ENCODE measurements at regions of chr6 and their contacts with region 1.

Region 1: GRCh38 chr6:151451950-151452749 is at the start of gene RMND1:
- DNase-seq: peak; percentile 97
- H3K4me3 ChIP-seq: peak within 1 kb of the TSS; percentile 83
- H3K27ac ChIP-seq: peak within 1 kb of the TSS; percentile 72
- H3K4me1 ChIP-seq: peaks cover 13% of the 10 kb centered on the region; the same call in 1 of the 2 replicates
- H3K27me3 ChIP-seq: no peaks in the 10 kb centered on the region
- CTCF ChIP-seq: no peak
- total RNA-seq, gene RMND1: 17.6 and 19.3 TPM in 2 replicates

Region 2: DNA sequence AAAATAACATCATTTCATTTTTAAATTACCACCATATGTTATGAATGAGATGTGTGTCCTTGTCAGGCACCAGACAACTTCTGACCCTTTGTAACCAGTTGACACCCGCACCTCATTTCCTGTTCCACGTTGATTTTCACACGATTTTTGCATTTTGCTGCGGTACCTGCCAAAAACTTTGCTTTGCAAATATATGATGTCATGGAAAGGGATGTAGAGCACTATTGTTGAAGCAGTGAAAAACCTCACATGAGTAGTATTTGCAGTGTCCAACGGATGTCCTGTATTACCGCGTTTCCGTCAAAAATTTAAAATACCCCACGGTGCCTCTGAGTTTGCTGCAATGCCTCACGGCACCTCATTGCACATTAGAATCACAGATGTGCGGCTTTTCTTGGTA is 471.1 kb before region 1 on chr6:
- CTCF ChIA-PET with region 1: no interaction called
- POLR2A ChIA-PET with region 1: no interaction called
- intact Hi-C with region 1: no loop called
- DNase-seq: no peak
- H3K4me3 ChIP-seq: no peak overlapping the region
- H3K27ac ChIP-seq: no peak overlapping the region
- H3K4me1 ChIP-seq: no peaks in the 10 kb centered on the region
- H3K27me3 ChIP-seq: no peaks in the 10 kb centered on the region
- CTCF ChIP-seq: no peak

Region 3: DNA sequence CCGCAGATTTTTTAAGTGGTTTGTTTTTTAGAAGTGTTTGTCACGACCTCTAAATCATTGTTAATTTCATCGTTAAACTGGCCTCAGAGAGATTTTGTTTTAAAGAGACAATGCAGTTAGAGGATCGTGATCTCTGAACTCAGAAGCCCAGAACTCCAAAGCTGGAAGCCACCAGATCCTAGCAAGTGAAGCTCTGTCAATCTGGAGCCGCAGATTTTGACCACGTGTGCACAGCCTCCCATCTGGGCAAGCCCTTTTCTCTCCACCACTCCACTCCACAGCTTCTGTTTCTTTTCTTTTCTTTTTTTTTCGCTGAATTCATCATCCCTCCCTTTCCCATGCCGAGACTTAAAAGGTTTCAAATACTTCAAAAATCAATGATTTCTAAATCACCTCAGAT is 213.2 kb after region 1 on chr6:
- CTCF ChIA-PET with region 1: no interaction called
- POLR2A ChIA-PET with region 1: no interaction called
- intact Hi-C with region 1: loop called (anchors 5 kb)
- DNase-seq: no peak
- H3K4me3 ChIP-seq: no peak overlapping the region
- H3K27ac ChIP-seq: no peak overlapping the region
- H3K4me1 ChIP-seq: peaks cover 24% of the 10 kb centered on the region
- H3K27me3 ChIP-seq: no peaks in the 10 kb centered on the region
- CTCF ChIP-seq: no peak

Region 4: DNA sequence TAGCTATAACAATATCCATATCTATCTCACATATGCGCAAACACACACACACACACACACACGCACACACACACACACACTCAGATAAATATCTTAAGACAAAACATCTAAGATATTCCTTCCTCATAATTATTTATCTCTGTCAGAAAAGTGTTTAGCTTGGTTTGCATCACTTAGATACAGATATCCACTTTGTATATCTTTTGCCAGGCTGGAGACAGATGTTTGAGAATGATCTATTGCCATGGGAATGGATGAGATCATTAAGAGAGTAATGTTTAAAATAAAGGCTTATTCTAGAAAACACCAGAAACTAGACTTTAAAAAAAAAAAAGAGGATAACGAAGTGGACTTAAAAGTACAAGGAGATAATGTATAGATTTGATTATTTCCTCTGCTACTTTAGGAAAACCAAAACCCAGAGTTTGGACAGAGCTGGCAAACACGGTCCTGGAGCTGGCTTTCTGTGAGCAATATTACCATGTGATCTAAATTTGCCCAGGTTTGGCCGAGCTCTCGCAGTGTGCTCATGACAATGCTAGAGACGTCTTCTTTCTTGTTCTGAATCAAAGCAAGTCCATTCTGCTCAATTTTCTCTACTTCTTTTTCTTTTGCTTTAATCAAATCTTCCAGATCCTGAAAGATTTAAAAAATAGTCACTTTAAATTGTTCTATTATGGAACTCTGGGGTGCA is 773.2 kb after region 1 on chr6:
- CTCF ChIA-PET with region 1: no interaction called
- POLR2A ChIA-PET with region 1: no interaction called
- intact Hi-C with region 1: no loop called
- DNase-seq: no peak
- H3K4me3 ChIP-seq: no peak overlapping the region
- H3K27ac ChIP-seq: no peak overlapping the region
- H3K4me1 ChIP-seq: no peaks in the 10 kb centered on the region
- H3K27me3 ChIP-seq: no peaks in the 10 kb centered on the region
- CTCF ChIP-seq: no peak